ENCODE measurements at regions of chr2 and their contacts with region 1.

Region 1: GRCh38 chr2:96265840-96266679 is at the starts of genes CIAO1 and TMEM127:
- DNase-seq: peak; percentile 96 to 99 (median 97)
- ATAC-seq: peak; percentile 97
- H3K4me3 ChIP-seq: peak within 1 kb of the TSS; percentile 86
- H3K4me3 Mint-ChIP-seq: peak within 1 kb of the TSS; percentile 86 to 100 (median 96)
- H3K27ac ChIP-seq: peak within 1 kb of the TSS; percentile 96
- H3K27ac Mint-ChIP-seq: peak within 1 kb of the TSS; percentile 87 to 97 (median 96)
- H3K4me1 ChIP-seq: peaks cover 31 to 37% of the 10 kb centered on the region in 2 donors
- H3K4me1 Mint-ChIP-seq: peaks cover 38 to 61% (median 46%) of the 10 kb centered on the region in 7 donors
- H3K27me3 ChIP-seq: no peaks in the 10 kb centered on the region
- H3K27me3 Mint-ChIP-seq: no peaks in the 10 kb centered on the region
- total RNA-seq, gene CIAO1: 62.1 to 85.3 (median 71.6) TPM
- total RNA-seq, gene TMEM127: 33.7 to 69.0 (median 40.4) TPM

Region 2: GRCh38 chr2:96145036-96145847 is 120.8 kb before region 1 on chr2 and contains the start of gene DUSP2:
- CTCF ChIA-PET with region 1: no interaction called
- POLR2A ChIA-PET with region 1: interaction called, 4 read pairs
- intact Hi-C with region 1: loop called (anchors 1 kb)
- DNase-seq: peak; percentile 79 to 97 (median 83)
- ATAC-seq: peak; percentile 61
- H3K4me3 ChIP-seq: peak within 1 kb of the TSS; percentile 69
- H3K4me3 Mint-ChIP-seq: peak within 1 kb of the TSS; percentile 90 to 98 (median 95)
- H3K27ac ChIP-seq: peak within 1 kb of the TSS; percentile 99
- H3K27ac Mint-ChIP-seq: peak within 1 kb of the TSS; percentile 96 to 100 (median 99)
- H3K4me1 ChIP-seq: peaks cover 50 to 52% of the 10 kb centered on the region in 2 donors
- H3K4me1 Mint-ChIP-seq: peaks cover 35 to 69% (median 62%) of the 10 kb centered on the region in 7 donors
- H3K27me3 ChIP-seq: no peaks in the 10 kb centered on the region
- H3K27me3 Mint-ChIP-seq: no peaks in the 10 kb centered on the region
- total RNA-seq, gene DUSP2: 22.1 to 255 (median 50.3) TPM

Region 3: DNA sequence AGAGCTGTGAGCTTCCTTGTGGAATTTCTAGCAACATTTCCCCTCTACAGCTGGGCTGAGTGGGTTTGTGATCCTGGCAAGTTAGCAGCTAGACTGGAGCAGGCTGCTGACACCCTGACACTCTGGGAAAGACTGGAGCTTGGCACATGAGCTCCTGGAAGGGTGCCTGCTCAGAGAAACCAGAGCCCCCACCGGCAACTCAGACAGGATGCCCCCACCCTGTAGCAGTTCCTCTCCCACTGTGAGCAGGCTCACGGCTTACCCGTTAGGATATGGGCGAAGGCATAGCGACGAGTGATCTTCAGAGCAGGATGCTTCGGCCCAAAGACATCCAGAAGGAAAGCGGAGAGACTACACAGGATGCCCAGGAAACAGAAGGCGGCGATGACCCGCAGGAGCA is 11.5 kb before region 1 on chr2:
- CTCF ChIA-PET with region 1: interaction called, 3 read pairs
- POLR2A ChIA-PET with region 1: interaction called, 13 read pairs
- intact Hi-C with region 1: loop called in 1 of 2 experiments (anchors 1 kb)
- DNase-seq: no peak
- ATAC-seq: no peak
- H3K4me3 ChIP-seq: no peak overlapping the region
- H3K4me3 Mint-ChIP-seq: peak overlapping the region in 1 of 10 donors; percentile 22
- H3K27ac ChIP-seq: no peak overlapping the region
- H3K27ac Mint-ChIP-seq: peak overlapping the region in 5 of 9 donors; percentile 21 to 73 (median 46)
- H3K4me1 ChIP-seq: peaks cover 0 to 48% of the 10 kb centered on the region in 2 donors
- H3K4me1 Mint-ChIP-seq: peaks cover 37 to 67% (median 53%) of the 10 kb centered on the region in 7 donors
- H3K27me3 ChIP-seq: no peaks in the 10 kb centered on the region
- H3K27me3 Mint-ChIP-seq: no peaks in the 10 kb centered on the region

Region 4: DNA sequence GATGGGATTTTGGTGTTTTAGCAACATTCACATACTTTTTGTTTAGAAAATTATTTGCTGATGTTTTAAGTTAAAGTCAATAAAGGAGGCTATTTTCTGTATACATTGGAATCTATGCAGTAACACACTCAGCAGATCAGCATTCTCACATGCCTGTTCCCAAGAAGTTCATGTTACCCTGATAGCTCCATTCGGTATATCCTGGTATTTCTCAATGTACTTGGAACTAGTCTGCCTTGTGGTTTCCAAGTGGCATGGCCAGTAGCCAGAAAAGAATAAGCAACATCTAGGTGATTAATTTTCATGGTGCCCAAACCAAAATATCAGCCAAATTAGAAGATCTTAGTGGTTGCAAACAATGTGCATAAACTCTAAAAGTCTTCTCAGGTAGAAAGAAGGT is 64.3 kb after region 1 on chr2:
- CTCF ChIA-PET with region 1: no interaction called
- POLR2A ChIA-PET with region 1: no interaction called
- intact Hi-C with region 1: loop called (anchors 1 to 2 kb)
- DNase-seq: no peak
- ATAC-seq: no peak
- H3K4me3 ChIP-seq: no peak overlapping the region
- H3K4me3 Mint-ChIP-seq: no peak overlapping the region
- H3K27ac ChIP-seq: no peak overlapping the region
- H3K27ac Mint-ChIP-seq: no peak overlapping the region
- H3K4me1 ChIP-seq: peaks cover 17 to 23% of the 10 kb centered on the region in 2 donors
- H3K4me1 Mint-ChIP-seq: peaks cover 23 to 64% (median 34%) of the 10 kb centered on the region in 7 donors
- H3K27me3 ChIP-seq: no peaks in the 10 kb centered on the region
- H3K27me3 Mint-ChIP-seq: no peaks in the 10 kb centered on the region

Region 5: DNA sequence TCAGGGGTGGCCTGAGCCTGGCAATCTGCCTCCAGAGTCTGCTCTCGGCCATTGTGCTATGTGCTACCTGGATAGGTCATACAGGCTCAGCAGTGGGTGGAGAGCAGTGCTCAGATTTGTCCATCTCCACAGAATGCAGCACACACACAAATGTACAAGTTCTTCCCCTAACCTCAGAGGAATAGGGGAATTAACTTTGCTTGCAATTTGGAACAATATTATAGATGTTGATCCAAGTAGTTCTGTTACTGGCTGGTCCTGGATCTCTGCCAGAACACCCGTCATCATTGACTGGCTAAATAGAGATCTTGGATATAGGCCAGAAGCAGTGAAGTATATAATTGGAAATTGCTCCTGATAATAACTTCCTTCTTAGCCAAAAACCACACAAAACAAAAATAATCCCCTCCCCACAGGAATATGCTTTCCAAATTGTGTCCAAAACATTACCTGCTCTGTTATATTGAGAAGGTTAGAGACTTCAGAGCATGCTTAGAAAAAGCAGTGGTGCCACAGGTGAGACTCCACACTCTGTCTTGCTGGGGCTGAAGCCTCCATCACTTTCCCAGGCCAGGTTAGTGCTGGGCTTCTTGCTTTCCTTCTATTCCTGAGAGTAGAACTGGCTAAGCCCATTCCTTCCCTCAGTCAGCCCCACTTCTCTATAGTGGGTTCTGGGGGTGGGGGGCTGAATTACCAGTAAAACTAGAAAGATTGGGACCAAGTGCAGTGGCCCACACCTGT is 108.3 kb after region 1 on chr2:
- CTCF ChIA-PET with region 1: no interaction called
- POLR2A ChIA-PET with region 1: no interaction called
- intact Hi-C with region 1: no loop called
- DNase-seq: no peak
- ATAC-seq: no peak
- H3K4me3 ChIP-seq: no peak overlapping the region
- H3K4me3 Mint-ChIP-seq: no peak overlapping the region
- H3K27ac ChIP-seq: no peak overlapping the region
- H3K27ac Mint-ChIP-seq: no peak overlapping the region
- H3K4me1 ChIP-seq: no peaks in the 10 kb centered on the region
- H3K4me1 Mint-ChIP-seq: no peaks in the 10 kb centered on the region
- H3K27me3 ChIP-seq: no peaks in the 10 kb centered on the region
- H3K27me3 Mint-ChIP-seq: no peaks in the 10 kb centered on the region

Region 6: GRCh38 chr2:96638144-96639121 is 372.4 kb after region 1 on chr2 and contains the start of gene KANSL3:
- CTCF ChIA-PET with region 1: no interaction called
- POLR2A ChIA-PET with region 1: interaction called, 3 read pairs
- intact Hi-C with region 1: loop called in 1 of 2 experiments (anchors 1 kb)
- DNase-seq: peak; percentile 81 to 96 (median 88)
- ATAC-seq: peak; percentile 93
- H3K4me3 ChIP-seq: peak within 1 kb of the TSS; percentile 97
- H3K4me3 Mint-ChIP-seq: peak within 1 kb of the TSS; percentile 89 to 96 (median 93)
- H3K27ac ChIP-seq: peak within 1 kb of the TSS; percentile 90
- H3K27ac Mint-ChIP-seq: peak within 1 kb of the TSS; percentile 87 to 95 (median 92)
- H3K4me1 ChIP-seq: peaks cover 18% of the 10 kb centered on the region in 2 donors
- H3K4me1 Mint-ChIP-seq: peaks cover 28 to 46% (median 39%) of the 10 kb centered on the region in 7 donors
- H3K27me3 ChIP-seq: no peaks in the 10 kb centered on the region
- H3K27me3 Mint-ChIP-seq: peaks cover 0 to 10% (median 0%) of the 10 kb centered on the region in 5 donors
- total RNA-seq, gene KANSL3: 54.0 to 65.0 (median 55.9) TPM

Region 7: GRCh38 chr2:96960153-96960961 is 694.3 kb after region 1 on chr2:
- CTCF ChIA-PET with region 1: no interaction called
- POLR2A ChIA-PET with region 1: no interaction called
- intact Hi-C with region 1: loop called in 1 of 2 experiments (anchors 5 kb)
- DNase-seq: peak; percentile 58 to 87 (median 75)
- ATAC-seq: peak; percentile 50
- H3K4me3 ChIP-seq: no peak overlapping the region
- H3K4me3 Mint-ChIP-seq: peak overlapping the region; percentile 37 to 83 (median 64)
- H3K27ac ChIP-seq: no peak overlapping the region
- H3K27ac Mint-ChIP-seq: peak overlapping the region; percentile 55 to 99 (median 92)
- H3K4me1 ChIP-seq: peaks cover 42 to 47% of the 10 kb centered on the region in 2 donors
- H3K4me1 Mint-ChIP-seq: peaks cover 36 to 57% (median 53%) of the 10 kb centered on the region in 7 donors
- H3K27me3 ChIP-seq: no peaks in the 10 kb centered on the region
- H3K27me3 Mint-ChIP-seq: peaks cover 0 to 2% (median 0%) of the 10 kb centered on the region in 5 donors

Measured in naive thymus-derived CD4-positive, alpha-beta T cell (primary cell).